Activated CD4-positive, alpha-beta T cell treated with anti-CD3 and anti-CD28 coated beads for 36 hours (primary cell): ENCODE measurements at regions of chr3 and their contacts with region 1.

Region 1: GRCh38 chr3:184561061-184561912 is at the start of gene EPHB3:
- DNase-seq: peak; percentile 97
- ATAC-seq: peak; percentile 91
- H3K4me3 Mint-ChIP-seq: peak within 1 kb of the TSS; percentile 57
- H3K27ac Mint-ChIP-seq: peak within 1 kb of the TSS; percentile 74
- H3K4me1 Mint-ChIP-seq: peaks cover 30% of the 10 kb centered on the region
- H3K27me3 Mint-ChIP-seq: peaks cover 28% of the 10 kb centered on the region
- total RNA-seq, gene EPHB3: not detected

Region 2: DNA sequence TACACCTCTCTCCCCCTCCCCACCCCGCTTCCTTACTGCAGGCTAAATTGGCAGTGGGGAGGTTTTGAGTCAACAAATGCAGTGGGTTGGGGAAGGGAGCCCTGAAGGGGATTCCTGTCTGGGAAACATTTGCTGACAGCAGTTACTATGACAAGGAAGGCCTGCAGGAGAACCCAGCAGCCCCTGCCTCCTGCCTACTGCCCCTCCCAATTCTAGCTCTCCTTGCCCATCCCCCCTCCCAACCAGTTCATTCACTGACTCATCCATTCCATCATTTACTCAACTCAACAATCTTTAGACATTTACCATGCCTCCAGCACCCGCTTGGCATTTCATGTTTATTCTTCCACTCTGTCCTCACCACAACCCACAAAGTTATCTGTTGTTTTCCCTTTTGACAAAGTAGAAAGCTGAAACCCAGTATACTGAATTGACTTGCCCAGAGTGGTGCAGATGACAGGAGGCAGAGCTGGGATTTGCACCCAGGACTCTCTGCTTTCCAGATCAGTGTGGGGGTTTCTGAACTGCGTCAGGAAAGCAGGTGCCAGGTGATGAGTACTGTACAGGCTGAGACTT is 75.5 kb after region 1 on chr3:
- CTCF ChIA-PET with region 1: interaction called, 12 read pairs
- POLR2A ChIA-PET with region 1: no interaction called
- intact Hi-C with region 1: no loop called
- DNase-seq: peak; percentile 80
- ATAC-seq: peak; percentile 90
- H3K4me3 Mint-ChIP-seq: no peak overlapping the region
- H3K27ac Mint-ChIP-seq: no peak overlapping the region
- H3K4me1 Mint-ChIP-seq: peaks cover 4% of the 10 kb centered on the region
- H3K27me3 Mint-ChIP-seq: peaks cover 3% of the 10 kb centered on the region

Region 3: DNA sequence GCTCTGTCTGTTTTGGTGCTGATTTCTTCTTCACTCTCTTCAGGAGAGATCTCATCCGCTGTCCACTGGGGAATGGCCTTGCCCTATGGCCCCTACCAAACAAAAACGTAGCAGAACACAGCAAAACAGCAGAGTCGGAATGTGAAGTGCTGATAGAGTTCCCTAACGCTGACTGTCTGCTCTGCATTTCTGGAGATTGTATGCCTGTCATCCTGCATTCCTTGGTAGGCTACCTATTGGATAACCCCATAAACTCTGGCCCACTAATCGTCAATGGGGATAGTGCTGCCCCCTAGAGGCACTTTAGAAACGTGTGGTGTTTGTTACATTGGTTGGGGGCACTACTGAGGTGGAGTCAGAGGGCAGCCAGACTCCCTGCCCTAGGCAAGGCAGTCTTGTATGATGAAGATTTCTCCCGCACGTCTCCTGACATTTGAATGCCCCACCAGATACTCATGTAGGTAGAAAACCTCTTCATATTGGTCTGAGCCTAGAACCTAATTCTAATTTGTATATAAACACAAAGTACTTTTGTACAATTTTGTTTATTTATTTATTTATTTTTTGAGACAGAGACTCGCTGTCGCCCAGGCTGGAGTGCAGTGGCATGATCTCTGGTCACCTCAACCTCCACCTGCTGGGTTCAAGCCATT is 166.2 kb after region 1 on chr3:
- CTCF ChIA-PET with region 1: interaction called, 4 read pairs
- POLR2A ChIA-PET with region 1: no interaction called
- intact Hi-C with region 1: loop called (anchors 1 kb)
- DNase-seq: peak; percentile 67
- ATAC-seq: peak; percentile 88
- H3K4me3 Mint-ChIP-seq: no peak overlapping the region
- H3K27ac Mint-ChIP-seq: no peak overlapping the region
- H3K4me1 Mint-ChIP-seq: no peaks in the 10 kb centered on the region
- H3K27me3 Mint-ChIP-seq: peaks cover 4% of the 10 kb centered on the region

Region 4: GRCh38 chr3:184748219-184749135 is 187.2 kb after region 1 on chr3:
- CTCF ChIA-PET with region 1: interaction called, 11 read pairs
- POLR2A ChIA-PET with region 1: no interaction called
- intact Hi-C with region 1: loop called in 1 of 2 experiments (anchors 1 kb)
- DNase-seq: peak; percentile 47
- ATAC-seq: peak; percentile 93
- H3K4me3 Mint-ChIP-seq: no peak overlapping the region
- H3K27ac Mint-ChIP-seq: peak overlapping the region; percentile 39
- H3K4me1 Mint-ChIP-seq: peaks cover 12% of the 10 kb centered on the region
- H3K27me3 Mint-ChIP-seq: peaks cover 2% of the 10 kb centered on the region

Region 5: GRCh38 chr3:184804801-184805200 is 243.5 kb after region 1 on chr3:
- CTCF ChIA-PET with region 1: interaction called, 12 read pairs
- POLR2A ChIA-PET with region 1: interaction called, 3 read pairs
- intact Hi-C with region 1: loop called in 1 of 2 experiments (anchors 1 kb)
- DNase-seq: no peak
- ATAC-seq: no peak
- H3K4me3 Mint-ChIP-seq: no peak overlapping the region
- H3K27ac Mint-ChIP-seq: no peak overlapping the region
- H3K4me1 Mint-ChIP-seq: no peaks in the 10 kb centered on the region
- H3K27me3 Mint-ChIP-seq: peaks cover 10% of the 10 kb centered on the region